Activated B cell treated with CpG ODN at 0.5 μM for 24 hours (primary cell): ENCODE measurements at regions of chr17 and their contacts with region 1.

Region 1: GRCh38 chr17:2401426-2402221 is 764 bp upstream of the MNT start:
- DNase-seq: peak; percentile 99
- ATAC-seq: peak; percentile 58
- H3K4me3 Mint-ChIP-seq: peak overlapping the region; percentile 94
- H3K27ac Mint-ChIP-seq: peak overlapping the region; percentile 99
- H3K4me1 Mint-ChIP-seq: peaks cover 39% of the 10 kb centered on the region
- H3K27me3 Mint-ChIP-seq: no peaks in the 10 kb centered on the region
- CTCF ChIP-seq: no peak

Region 2: DNA sequence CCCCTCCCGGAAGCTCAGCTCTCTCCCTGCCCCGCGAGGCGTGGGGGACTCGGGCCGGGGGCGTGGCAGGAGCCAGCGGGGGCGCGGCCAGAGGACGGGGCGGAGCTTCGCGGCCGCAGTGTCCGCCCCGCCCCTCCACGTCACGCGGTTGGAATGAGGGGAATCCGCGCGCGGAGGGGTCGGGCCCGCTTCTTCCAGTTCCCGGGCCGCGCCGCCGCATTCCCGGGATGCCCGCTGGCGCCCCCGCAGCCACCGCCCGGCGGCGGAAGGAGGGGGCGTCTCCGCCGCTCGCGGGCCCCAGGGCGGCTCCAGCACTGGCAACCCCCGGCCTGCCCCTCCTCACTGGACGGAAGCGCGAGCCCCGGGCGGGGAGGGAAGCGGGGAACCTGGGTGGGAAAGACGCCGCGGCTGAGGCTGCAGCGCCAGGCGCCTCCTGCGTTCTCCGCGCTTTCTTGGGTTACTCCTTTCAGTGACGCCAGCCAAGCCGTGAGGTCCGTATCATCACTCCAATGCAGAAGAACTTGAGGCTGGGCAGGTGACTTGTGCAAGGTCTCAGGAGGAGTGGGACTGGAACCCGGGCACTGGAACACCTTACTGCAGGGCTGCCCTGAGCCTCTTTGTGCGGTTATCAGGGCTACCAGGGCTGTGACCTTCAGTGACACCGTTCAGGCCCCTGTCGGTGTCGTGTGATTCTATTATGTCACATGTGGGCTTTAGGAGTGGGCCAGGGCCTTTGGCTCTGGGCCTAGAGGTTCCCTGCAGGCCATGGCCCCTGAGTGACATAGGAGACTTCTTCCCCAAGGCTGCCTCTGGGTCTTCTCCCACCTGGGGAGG is 913.4 kb before region 1 on chr17:
- CTCF ChIA-PET with region 1: no interaction called
- POLR2A ChIA-PET with region 1: no interaction called
- intact Hi-C with region 1: loop called (anchors 2 kb)
- DNase-seq: peak; percentile 85
- ATAC-seq: peak; percentile 19
- H3K4me3 Mint-ChIP-seq: peak overlapping the region; percentile 84
- H3K27ac Mint-ChIP-seq: peak overlapping the region; percentile 83
- H3K4me1 Mint-ChIP-seq: peaks cover 58% of the 10 kb centered on the region
- H3K27me3 Mint-ChIP-seq: no peaks in the 10 kb centered on the region
- CTCF ChIP-seq: no peak

Region 3: GRCh38 chr17:1793447-1793806 is 608.2 kb before region 1 on chr17:
- CTCF ChIA-PET with region 1: no interaction called
- POLR2A ChIA-PET with region 1: no interaction called
- intact Hi-C with region 1: no loop called
- DNase-seq: no peak
- ATAC-seq: no peak
- H3K4me3 Mint-ChIP-seq: no peak overlapping the region
- H3K27ac Mint-ChIP-seq: no peak overlapping the region
- H3K4me1 Mint-ChIP-seq: peaks cover 2% of the 10 kb centered on the region
- H3K27me3 Mint-ChIP-seq: no peaks in the 10 kb centered on the region
- CTCF ChIP-seq: no peak

Region 4: GRCh38 chr17:1947229-1947742 is 454.3 kb before region 1 on chr17:
- CTCF ChIA-PET with region 1: no interaction called
- POLR2A ChIA-PET with region 1: no interaction called
- intact Hi-C with region 1: no loop called
- DNase-seq: no peak
- ATAC-seq: no peak
- H3K4me3 Mint-ChIP-seq: no peak overlapping the region
- H3K27ac Mint-ChIP-seq: no peak overlapping the region
- H3K4me1 Mint-ChIP-seq: no peaks in the 10 kb centered on the region
- H3K27me3 Mint-ChIP-seq: no peaks in the 10 kb centered on the region
- CTCF ChIP-seq: no peak

Region 5: GRCh38 chr17:2087597-2088211 is 313.9 kb before region 1 on chr17:
- CTCF ChIA-PET with region 1: no interaction called
- POLR2A ChIA-PET with region 1: no interaction called
- intact Hi-C with region 1: loop called (anchors 2 kb)
- DNase-seq: peak; percentile 48
- ATAC-seq: peak; percentile 63
- H3K4me3 Mint-ChIP-seq: peak overlapping the region; percentile 60
- H3K27ac Mint-ChIP-seq: peak overlapping the region; percentile 72
- H3K4me1 Mint-ChIP-seq: peaks cover 80% of the 10 kb centered on the region
- H3K27me3 Mint-ChIP-seq: no peaks in the 10 kb centered on the region
- CTCF ChIP-seq: no peak

Region 6: DNA sequence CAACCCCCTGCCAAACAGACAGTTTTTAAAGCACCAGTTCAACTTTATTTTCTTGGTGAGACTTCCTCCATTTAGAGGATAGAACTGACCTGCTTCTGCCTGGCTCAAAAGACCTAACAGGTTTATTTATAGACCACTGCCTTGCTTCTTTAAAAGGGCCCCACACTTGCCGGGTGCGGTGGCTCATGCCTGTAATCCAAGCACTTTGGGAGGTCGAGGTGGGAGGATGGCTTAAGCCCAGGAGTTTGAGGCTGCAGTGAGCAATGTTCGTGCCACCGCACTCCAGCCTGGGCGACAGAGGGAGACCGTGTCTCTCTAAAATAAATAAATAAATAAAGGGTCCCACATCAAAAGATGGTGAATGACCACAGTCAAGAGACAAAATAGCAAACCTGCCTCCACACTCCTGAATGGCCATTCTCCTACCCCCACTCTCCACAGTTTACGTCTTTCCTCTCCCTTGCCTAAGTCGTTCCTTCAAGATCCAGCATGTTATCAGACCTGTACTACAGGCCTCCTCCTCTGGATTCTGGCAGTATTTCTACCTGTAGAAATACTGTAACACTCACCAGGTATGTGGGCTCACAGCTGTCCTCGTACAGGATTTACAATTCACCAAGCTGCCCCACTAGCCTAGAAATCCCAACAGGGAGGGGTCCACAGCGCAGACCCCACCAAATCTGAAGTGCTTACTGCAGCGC is 193.7 kb before region 1 on chr17:
- CTCF ChIA-PET with region 1: no interaction called
- POLR2A ChIA-PET with region 1: no interaction called
- intact Hi-C with region 1: no loop called
- DNase-seq: no peak
- ATAC-seq: no peak
- H3K4me3 Mint-ChIP-seq: no peak overlapping the region
- H3K27ac Mint-ChIP-seq: no peak overlapping the region
- H3K4me1 Mint-ChIP-seq: no peaks in the 10 kb centered on the region
- H3K27me3 Mint-ChIP-seq: no peaks in the 10 kb centered on the region
- CTCF ChIP-seq: no peak

Region 7: GRCh38 chr17:2336215-2336851 is 65.3 kb before region 1 on chr17 and contains the start of gene TSR1:
- CTCF ChIA-PET with region 1: no interaction called
- POLR2A ChIA-PET with region 1: interaction called, 23 read pairs
- intact Hi-C with region 1: loop called (anchors 1 kb)
- DNase-seq: peak; percentile 85
- ATAC-seq: peak; percentile 79
- H3K4me3 Mint-ChIP-seq: peak within 1 kb of the TSS; percentile 99
- H3K27ac Mint-ChIP-seq: peak within 1 kb of the TSS; percentile 96
- H3K4me1 Mint-ChIP-seq: peaks cover 23% of the 10 kb centered on the region
- H3K27me3 Mint-ChIP-seq: no peaks in the 10 kb centered on the region
- CTCF ChIP-seq: no peak
- total RNA-seq, gene TSR1: 46.4 and 48.5 TPM in 2 replicates

Region 8: GRCh38 chr17:2416010-2416734 is 14.5 kb after region 1 on chr17:
- CTCF ChIA-PET with region 1: interaction called, 12 read pairs
- POLR2A ChIA-PET with region 1: interaction called, 15 read pairs
- intact Hi-C with region 1: loop called (anchors 1 kb)
- DNase-seq: peak; percentile 84
- ATAC-seq: peak; percentile 83
- H3K4me3 Mint-ChIP-seq: no peak overlapping the region
- H3K27ac Mint-ChIP-seq: no peak overlapping the region
- H3K4me1 Mint-ChIP-seq: no peaks in the 10 kb centered on the region
- H3K27me3 Mint-ChIP-seq: no peaks in the 10 kb centered on the region
- CTCF ChIP-seq: peak; percentile 47

Region 9: DNA sequence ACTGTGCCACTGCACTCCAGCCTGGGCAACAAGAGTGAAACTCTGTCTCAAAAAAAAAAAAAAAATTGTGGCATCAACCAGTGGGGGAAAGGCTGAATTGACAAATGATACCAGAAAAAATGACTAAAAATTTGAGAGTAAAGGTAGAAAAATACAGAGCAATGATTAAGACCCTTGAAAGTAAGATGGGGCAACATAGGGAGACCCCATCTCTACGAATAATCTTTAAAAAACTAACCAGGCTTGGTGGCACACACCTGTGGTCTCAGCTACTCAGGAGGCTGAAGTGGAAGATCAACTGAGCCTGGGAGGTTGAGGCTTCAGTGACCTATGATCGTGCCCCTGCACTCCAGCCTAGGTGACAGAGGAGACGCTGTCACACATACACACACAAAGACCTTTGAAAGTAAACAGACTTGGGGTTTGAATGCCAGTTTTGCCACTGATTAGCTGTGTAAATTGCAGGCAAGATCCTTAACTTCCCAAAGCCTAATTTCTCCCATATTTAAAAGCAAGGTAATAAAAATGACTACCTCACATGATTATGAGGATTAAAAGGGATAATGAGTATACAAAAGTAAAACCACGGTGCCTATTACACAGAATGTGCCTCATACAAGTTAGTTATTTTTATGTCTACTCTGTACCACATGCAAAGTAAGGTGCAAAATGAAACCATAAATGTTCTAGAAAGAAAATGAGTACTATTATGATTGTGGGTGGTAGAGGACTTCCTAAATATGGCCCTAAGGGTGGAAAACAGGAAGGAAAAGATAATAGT is 170.1 kb after region 1 on chr17:
- CTCF ChIA-PET with region 1: no interaction called
- POLR2A ChIA-PET with region 1: no interaction called
- intact Hi-C with region 1: no loop called
- DNase-seq: no peak
- ATAC-seq: peak; percentile 82
- H3K4me3 Mint-ChIP-seq: peak overlapping the region; percentile 74
- H3K27ac Mint-ChIP-seq: peak overlapping the region; percentile 78
- H3K4me1 Mint-ChIP-seq: peaks cover 14% of the 10 kb centered on the region
- H3K27me3 Mint-ChIP-seq: peaks cover 3% of the 10 kb centered on the region
- CTCF ChIP-seq: no peak

Region 10: DNA sequence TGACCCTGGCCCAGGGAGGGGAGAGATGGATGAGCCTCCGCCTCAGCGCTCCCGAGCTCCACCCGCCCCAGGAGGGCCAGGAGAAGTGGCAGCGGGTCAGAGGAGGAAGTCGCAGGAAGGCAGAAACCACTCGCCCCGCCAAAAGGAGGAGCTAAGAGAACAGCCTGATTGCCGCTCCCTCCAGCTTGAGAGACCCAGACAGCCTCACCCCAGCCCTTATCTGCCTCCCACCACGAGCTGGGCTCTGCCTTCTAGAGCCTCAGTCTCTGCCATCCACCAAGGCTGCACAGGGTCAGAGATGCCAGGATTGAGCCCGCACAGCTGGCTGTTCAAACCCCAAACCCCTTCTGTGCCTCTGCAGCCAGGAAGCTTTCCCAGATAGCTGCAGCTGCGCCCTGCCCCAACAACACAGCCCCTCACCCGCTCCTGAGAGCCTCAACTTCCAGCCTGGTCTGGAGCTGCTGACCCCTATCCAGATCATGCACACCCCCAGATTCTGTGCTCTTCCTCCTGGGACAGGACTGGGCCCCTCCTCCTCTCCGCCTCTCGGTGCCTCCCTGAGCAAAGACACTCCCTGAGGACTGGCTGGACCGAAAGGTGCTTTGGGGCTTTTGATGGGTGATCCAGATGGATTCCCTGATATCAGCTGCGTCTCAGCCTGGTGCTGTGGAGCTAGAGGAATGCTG is 1563.6 kb after region 1 on chr17:
- CTCF ChIA-PET with region 1: no interaction called
- POLR2A ChIA-PET with region 1: no interaction called
- intact Hi-C with region 1: loop called (anchors 5 kb)
- DNase-seq: peak; percentile 64
- ATAC-seq: peak; percentile 49
- H3K4me3 Mint-ChIP-seq: peak overlapping the region; percentile 87
- H3K27ac Mint-ChIP-seq: peak overlapping the region; percentile 94
- H3K4me1 Mint-ChIP-seq: peaks cover 77% of the 10 kb centered on the region
- H3K27me3 Mint-ChIP-seq: no peaks in the 10 kb centered on the region
- CTCF ChIP-seq: no peak